GM10248 (cell line): ENCODE measurements at regions of chr1 and their contacts with region 1.

Region 1: GRCh38 chr1:206489980-206490770 is 17.2 kb upstream of the RASSF5 start:
- DNase-seq: peak; percentile 83
- CTCF ChIP-seq: peak; percentile 88

Region 2: GRCh38 chr1:205933671-205934618 is 556.2 kb before region 1 on chr1:
- CTCF ChIA-PET with region 1: no interaction called
- POLR2A ChIA-PET with region 1: no interaction called
- DNase-seq: no peak
- CTCF ChIP-seq: no peak

Region 3: DNA sequence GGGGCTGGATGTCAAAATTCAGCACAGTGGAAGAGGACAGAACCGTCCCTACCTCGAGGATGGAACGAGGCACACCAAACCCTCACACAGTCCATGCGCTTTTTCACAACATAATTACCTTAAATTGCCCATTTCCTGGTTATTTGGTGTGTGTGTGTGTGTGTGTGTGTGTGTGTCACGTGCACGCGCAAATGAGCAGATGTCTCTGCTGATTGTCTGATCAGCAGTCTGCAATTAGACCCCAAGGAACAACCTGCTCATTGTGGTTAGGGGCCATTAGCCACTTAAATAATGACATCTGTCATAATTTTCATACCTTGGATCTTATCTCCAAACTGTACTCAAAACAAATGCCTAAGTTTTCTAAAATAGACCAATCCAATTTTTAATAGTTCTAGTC is 396.2 kb before region 1 on chr1:
- CTCF ChIA-PET with region 1: no interaction called
- POLR2A ChIA-PET with region 1: no interaction called
- DNase-seq: no peak
- CTCF ChIP-seq: no peak

Region 4: GRCh38 chr1:206419250-206419649 is 70.9 kb before region 1 on chr1:
- CTCF ChIA-PET with region 1: no interaction called
- POLR2A ChIA-PET with region 1: no interaction called
- DNase-seq: no peak
- CTCF ChIP-seq: no peak

Region 5: DNA sequence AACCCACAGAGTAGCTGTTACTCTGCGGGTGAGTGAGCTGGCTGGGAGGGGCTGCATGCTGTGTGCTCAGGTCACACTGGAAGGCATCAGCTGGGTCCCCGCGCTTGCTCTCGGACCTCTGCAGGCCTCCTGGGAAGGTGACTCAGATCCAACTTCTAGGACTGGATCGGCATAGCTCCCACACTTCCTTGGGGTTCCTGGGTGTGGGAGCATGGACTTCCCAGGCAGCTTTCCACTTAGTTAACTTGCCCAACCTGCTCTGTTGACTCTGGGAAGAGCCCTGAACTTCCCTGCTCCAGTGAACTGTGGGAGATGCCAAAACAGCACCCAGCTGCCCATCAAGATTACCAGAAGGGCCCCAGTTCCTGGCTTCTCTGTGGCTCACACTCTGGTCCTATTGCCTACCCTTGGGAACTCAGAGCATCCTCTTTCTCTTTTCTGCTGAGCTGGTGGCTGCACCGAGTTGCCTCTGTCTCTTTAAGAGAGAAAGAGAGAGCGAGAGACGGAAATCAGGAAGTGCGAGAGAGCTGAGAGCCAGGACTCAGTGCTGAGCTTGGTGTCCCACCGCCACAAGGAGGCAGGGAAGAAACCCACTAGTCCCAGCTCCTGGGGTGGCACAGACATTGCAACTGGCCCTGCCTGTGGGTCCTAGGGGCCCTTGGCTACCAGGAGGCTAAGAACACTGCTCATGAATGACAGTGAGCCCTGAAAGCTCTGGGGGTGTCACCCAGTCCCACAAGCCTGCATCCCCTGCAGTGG is 20.1 kb before region 1 on chr1 and contains the start of gene IKBKE:
- CTCF ChIA-PET with region 1: interaction called, 70 read pairs
- POLR2A ChIA-PET with region 1: no interaction called
- DNase-seq: peak; percentile 80
- CTCF ChIP-seq: no peak

Region 6: GRCh38 chr1:206507284-206508129 is 17.3 kb after region 1 on chr1 and contains the start of gene RASSF5:
- CTCF ChIA-PET with region 1: interaction called, 179 read pairs
- POLR2A ChIA-PET with region 1: interaction called, 8 read pairs
- DNase-seq: peak; percentile 90
- CTCF ChIP-seq: no peak

Region 7: DNA sequence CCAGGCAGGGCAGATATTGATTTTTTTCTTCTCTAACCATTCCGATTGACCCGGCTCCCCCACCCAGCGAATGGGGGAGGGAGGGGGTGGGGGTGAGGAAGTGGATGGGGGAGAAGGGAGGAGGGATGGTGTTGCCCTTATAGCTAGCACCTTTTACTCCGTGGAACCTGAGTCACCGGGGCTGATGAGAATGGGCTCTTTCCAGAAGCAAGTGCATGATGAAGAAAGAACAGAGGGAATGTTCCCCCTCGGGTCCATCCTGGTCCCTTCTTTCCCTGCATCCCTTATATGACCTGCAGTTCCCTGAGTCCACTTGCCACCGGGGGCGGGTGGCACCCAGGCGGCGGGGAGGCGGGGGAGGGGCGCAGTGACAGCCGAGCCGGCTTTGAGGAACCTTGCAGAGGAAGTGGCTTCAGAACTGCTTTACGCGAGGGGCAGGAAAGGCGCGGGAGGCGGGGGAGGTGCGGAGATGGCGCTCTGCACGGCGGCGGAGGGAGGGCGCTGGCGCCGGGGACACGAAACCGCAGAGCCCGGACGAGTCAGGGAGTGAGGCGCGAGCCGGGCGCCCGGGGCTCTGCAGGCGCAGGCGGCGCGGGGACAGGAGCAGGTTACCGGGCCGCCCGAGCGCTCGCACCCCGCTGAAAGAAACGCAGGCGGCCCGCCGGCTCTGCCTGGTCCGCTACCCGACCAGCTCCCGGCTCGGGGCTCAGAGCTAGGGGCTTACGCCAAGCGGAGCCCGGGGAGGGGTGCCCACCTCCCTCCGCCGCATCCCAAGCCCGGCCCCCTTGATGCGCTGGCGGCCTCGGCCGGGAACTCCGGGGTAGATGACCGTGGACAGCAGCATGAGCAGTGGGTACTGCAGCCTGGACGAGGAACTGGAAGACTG is 66.8 kb after region 1 on chr1:
- CTCF ChIA-PET with region 1: interaction called, 10 read pairs
- POLR2A ChIA-PET with region 1: no interaction called
- DNase-seq: peak; percentile 80
- CTCF ChIP-seq: no peak

Region 8: GRCh38 chr1:206583707-206584648 is 93.8 kb after region 1 on chr1:
- CTCF ChIA-PET with region 1: interaction called, 135 read pairs
- POLR2A ChIA-PET with region 1: no interaction called
- DNase-seq: peak; percentile 77
- CTCF ChIP-seq: peak; percentile 83

Region 9: GRCh38 chr1:206635080-206635977 is 145.2 kb after region 1 on chr1 and contains the start of gene DYRK3:
- CTCF ChIA-PET with region 1: interaction called, 10 read pairs
- POLR2A ChIA-PET with region 1: no interaction called
- DNase-seq: peak; percentile 97
- CTCF ChIP-seq: no peak